Heart right ventricle (tissue), 16 donors: ENCODE measurements at regions of chr10 and their contacts with region 1.

Region 1: DNA sequence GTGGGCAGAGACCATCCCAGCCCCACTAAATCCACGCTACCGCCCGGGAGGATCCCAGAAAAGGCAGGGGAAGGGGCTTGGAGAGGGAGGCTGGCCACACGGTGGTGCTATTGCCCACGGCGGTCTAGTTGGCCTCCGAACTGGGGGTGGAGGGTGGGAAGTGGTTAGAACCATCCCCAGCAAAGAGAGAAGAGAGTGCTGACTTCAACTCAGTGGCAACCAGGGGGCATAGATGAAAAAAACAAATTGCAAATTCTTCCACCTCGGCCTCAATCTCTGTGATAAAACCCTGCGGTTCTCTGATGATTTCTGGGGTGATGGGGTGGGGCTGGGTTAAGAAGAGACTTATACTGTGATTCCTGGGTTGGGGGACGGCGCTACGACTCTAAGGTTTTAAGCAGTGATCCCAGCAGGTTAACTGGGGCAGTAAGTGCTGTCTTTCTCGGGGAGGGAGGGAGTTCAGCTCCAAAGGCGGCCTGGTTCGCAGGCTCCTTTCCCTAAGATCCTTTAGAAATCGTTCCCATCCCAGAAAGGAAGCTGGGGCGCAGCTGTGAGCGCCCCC is 154.5 kb upstream of the LYZL2 start:
- DNase-seq: peak; percentile 90 to 91
- ATAC-seq: peak; percentile 77 to 90 (median 86)
- H3K4me3 ChIP-seq: peak overlapping the region; percentile 51 to 96 (median 75)
- H3K27ac ChIP-seq: peak overlapping the region; percentile 94 to 100 (median 98)
- H3K4me1 ChIP-seq: peaks cover 0 to 46% (median 12%) of the 10 kb centered on the region in 9 donors
- H3K27me3 ChIP-seq: no peaks in the 10 kb centered on the region
- CTCF ChIP-seq: peak; percentile 62 to 90 (median 87)

Region 2: GRCh38 chr10:30857803-30858202 is 73.8 kb after region 1 on chr10:
- intact Hi-C with region 1: loop called in 1 of 10 experiments (anchors 5 kb)
- DNase-seq: peak; percentile 59 to 73
- ATAC-seq: peak; percentile 85 to 94 (median 91)
- H3K4me3 ChIP-seq: no peak overlapping the region
- H3K27ac ChIP-seq: peak overlapping the region; percentile 11 to 81 (median 69)
- H3K4me1 ChIP-seq: peaks cover 7 to 69% (median 31%) of the 10 kb centered on the region in 9 donors
- H3K27me3 ChIP-seq: no peaks in the 10 kb centered on the region
- CTCF ChIP-seq: no peak

Region 3: DNA sequence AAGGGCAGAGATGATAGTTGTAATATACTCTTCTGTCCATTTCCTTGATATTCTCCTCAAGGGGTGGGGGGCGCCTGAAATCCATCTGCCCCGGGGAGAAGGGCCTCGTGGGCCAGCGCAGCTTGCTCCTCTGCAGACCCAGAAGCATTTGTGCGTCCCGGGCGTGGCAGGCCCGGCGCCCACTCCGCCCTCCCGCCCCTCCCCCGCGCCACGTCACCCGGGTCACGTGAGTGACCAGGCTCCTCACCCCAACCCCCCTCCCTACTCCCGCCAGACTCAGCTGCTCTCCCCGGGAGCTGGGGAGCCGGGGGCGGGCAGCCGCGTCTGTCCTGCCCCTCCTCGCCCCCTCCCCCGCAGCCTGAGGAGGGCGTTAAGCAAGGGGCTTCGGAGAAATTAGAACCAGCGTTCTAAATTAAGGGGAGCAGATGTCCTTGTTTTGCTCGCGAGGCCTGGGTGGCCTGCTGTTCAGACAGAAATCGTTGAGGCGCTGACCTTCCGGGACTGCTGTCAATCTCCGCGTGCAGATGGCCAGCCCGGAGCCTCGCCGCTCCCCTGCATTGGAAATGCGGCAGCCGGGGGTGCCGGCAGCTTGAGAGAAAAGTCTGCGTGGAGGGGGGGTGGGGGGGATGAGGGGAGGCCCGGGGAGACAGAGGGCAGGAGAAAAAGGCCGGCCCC is 349.7 kb after region 1 on chr10:
- intact Hi-C with region 1: loop called in 2 of 10 experiments (anchors 10 kb)
- DNase-seq: peak; percentile 89 to 90
- ATAC-seq: peak; percentile 91 to 96 (median 94)
- H3K4me3 ChIP-seq: peak overlapping the region; percentile 11 to 58 (median 51)
- H3K27ac ChIP-seq: peak overlapping the region; percentile 65 to 93 (median 90)
- H3K4me1 ChIP-seq: peaks cover 6 to 38% (median 29%) of the 10 kb centered on the region in 9 donors
- H3K27me3 ChIP-seq: no peaks in the 10 kb centered on the region
- CTCF ChIP-seq: no peak

Region 4: GRCh38 chr10:31157123-31158010 is 373.3 kb after region 1 on chr10:
- intact Hi-C with region 1: loop called in 1 of 10 experiments (anchors 5 kb)
- DNase-seq: peak; percentile 69 to 85
- ATAC-seq: peak; percentile 87 to 94 (median 92)
- H3K4me3 ChIP-seq: peak overlapping the region in 1 of 10 donors; percentile 22
- H3K27ac ChIP-seq: peak overlapping the region; percentile 67 to 90 (median 78)
- H3K4me1 ChIP-seq: peaks cover 15 to 48% (median 32%) of the 10 kb centered on the region in 9 donors
- H3K27me3 ChIP-seq: no peaks in the 10 kb centered on the region
- CTCF ChIP-seq: no peak

Region 5: DNA sequence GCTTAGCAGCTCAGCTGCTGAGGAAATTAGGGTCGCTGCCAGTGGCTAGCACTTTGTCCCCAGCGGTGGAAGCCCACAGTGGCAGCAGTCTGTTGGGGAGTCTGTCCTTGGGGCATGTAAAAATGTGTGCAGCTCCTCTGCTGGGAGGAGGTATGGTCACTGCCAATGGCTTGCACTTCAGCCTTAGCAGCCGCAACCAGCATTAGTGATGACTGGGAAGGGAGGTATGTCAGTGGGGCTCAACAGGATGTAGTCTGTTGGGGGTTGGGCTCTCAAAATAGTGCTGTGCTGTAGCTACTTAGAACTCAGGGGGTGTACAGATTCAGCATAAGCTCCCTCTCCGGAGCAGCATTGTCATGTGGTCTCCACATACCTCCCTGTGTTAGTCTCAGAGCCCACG is 724.9 kb after region 1 on chr10:
- intact Hi-C with region 1: loop called in 1 of 10 experiments (anchors 10 kb)
- DNase-seq: no peak
- ATAC-seq: no peak
- H3K4me3 ChIP-seq: no peak overlapping the region
- H3K27ac ChIP-seq: no peak overlapping the region
- H3K4me1 ChIP-seq: no peaks in the 10 kb centered on the region
- H3K27me3 ChIP-seq: no peaks in the 10 kb centered on the region
- CTCF ChIP-seq: no peak

Region 6: DNA sequence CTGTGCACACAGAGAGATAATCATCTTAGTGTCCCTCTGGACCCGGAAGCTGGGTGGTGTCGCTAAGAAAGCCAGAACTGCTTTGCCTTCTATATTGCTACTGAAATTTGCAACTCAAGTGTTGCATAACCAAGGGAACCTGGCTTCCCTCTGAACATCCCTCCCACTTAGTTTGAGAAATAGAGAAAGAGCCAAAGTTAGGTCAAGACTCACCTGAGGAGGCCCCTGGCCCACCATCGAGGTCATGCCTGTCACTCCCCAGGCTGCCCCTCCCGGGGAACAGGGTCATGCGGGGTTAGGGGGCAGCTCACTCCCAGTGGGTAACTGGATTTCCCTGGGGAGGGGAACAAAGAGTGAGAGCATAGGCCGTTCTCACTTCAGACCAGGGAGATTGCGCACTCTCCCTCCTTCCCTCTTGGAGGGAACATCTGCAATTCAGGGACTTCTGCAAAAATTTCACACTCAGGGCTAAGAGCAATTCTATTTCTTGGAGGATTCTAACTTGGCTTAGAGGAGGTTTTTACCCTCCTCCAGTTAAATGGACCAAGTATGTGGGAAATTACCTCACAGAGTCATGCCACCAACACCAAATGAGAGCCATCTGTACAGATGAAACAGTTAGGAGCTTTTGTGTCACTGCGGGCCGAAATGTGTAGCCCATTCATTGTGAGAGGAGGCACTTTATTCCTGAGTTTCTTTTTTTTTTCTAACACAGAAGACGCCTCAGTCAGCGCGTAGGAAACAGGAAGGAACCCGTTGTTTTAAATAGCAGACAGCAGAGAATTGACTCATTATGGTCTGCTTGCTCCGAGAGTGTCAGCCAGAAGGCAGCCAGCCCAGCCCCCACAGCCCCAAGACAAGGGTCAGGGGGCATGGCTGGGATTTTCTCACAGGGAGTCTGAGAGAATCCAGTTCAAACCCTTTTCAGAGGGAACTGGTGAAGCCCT is 923.3 kb after region 1 on chr10:
- intact Hi-C with region 1: loop called in 1 of 10 experiments (anchors 5 kb)
- DNase-seq: peak; percentile 72 to 83
- ATAC-seq: peak; percentile 82 to 95 (median 89)
- H3K4me3 ChIP-seq: peak overlapping the region in 6 of 10 donors; percentile 26 to 36 (median 34)
- H3K27ac ChIP-seq: peak overlapping the region; percentile 62 to 97 (median 88)
- H3K4me1 ChIP-seq: peaks cover 15 to 64% (median 50%) of the 10 kb centered on the region in 9 donors
- H3K27me3 ChIP-seq: no peaks in the 10 kb centered on the region
- CTCF ChIP-seq: no peak

Region 7: DNA sequence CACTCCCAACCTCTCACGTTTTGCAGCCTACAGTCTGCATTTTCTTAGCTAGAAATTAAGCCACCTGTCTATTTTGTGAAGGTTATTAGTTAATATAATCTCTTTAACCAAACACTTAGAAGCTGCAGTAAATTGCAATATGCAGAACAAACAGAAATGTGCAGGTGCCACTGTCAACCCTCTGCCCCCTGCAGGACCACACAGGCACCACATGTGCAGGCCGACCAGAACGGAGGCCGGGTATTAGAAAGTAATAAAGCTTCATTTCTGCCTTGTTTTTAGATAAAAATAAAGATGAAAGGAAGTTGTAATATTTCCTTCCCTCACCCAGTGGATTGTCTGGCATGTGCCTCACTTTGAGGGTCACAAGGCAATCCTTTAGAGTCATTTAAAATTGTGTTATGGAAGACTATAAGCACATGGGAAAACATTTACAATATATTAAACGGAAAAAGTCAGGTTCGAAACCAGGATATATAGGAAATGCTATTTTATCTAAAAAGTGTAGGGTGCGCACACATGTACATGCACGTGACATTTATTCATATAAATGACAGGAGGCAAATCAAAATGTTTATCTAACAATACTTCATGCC is 986.4 kb after region 1 on chr10:
- intact Hi-C with region 1: loop called in 3 of 10 experiments (anchors 2 to 10 kb)
- DNase-seq: peak in 1 of 2 donors; percentile 60
- ATAC-seq: peak in 6 of 8 donors; percentile 63 to 85 (median 72)
- H3K4me3 ChIP-seq: no peak overlapping the region
- H3K27ac ChIP-seq: peak overlapping the region in 2 of 10 donors; percentile 1 to 11
- H3K4me1 ChIP-seq: peaks cover 0 to 14% (median 0%) of the 10 kb centered on the region in 9 donors
- H3K27me3 ChIP-seq: no peaks in the 10 kb centered on the region
- CTCF ChIP-seq: peak; percentile 64 to 91 (median 85)